ENCODE measurements at regions of chr2 and their contacts with region 1.

Region 1: GRCh38 chr2:109613922-109614714 is at the starts of genes SEPTIN10 and SOWAHC:
- DNase-seq: peak; percentile 96 to 98 (median 97)
- H3K4me3 ChIP-seq: peak within 1 kb of the TSS; percentile 85
- H3K27ac ChIP-seq: peak within 1 kb of the TSS; percentile 98 to 99
- H3K4me1 ChIP-seq: peaks cover 18% of the 10 kb centered on the region
- H3K27me3 ChIP-seq: no peaks in the 10 kb centered on the region
- CTCF ChIP-seq: no peak
- EP300 ChIP-seq: peak; percentile 88
- POLR2A ChIP-seq: peak; percentile 84
- total RNA-seq, gene SEPTIN10: 71.6 to 93.8 (median 78.0) TPM
- total RNA-seq, gene SOWAHC: 13.9 to 36.1 (median 17.0) TPM

Region 2: GRCh38 chr2:109558076-109558882 is 55.8 kb before region 1 on chr2:
- intact Hi-C with region 1: loop called in 1 of 4 experiments (anchors 2 kb)
- DNase-seq: no peak
- H3K4me3 ChIP-seq: no peak overlapping the region
- H3K27ac ChIP-seq: no peak overlapping the region
- H3K4me1 ChIP-seq: no peaks in the 10 kb centered on the region
- H3K27me3 ChIP-seq: no peaks in the 10 kb centered on the region
- CTCF ChIP-seq: no peak
- EP300 ChIP-seq: no peak
- POLR2A ChIP-seq: no peak

Region 3: GRCh38 chr2:109690822-109691547 is 76.9 kb after region 1 on chr2:
- intact Hi-C with region 1: loop called in 2 of 4 experiments (anchors 10 kb)
- DNase-seq: peak; percentile 54 to 67 (median 62)
- H3K4me3 ChIP-seq: no peak overlapping the region
- H3K27ac ChIP-seq: peak overlapping the region; percentile 7 to 86
- H3K4me1 ChIP-seq: peaks cover 33% of the 10 kb centered on the region
- H3K27me3 ChIP-seq: no peaks in the 10 kb centered on the region
- CTCF ChIP-seq: no peak
- EP300 ChIP-seq: no peak
- POLR2A ChIP-seq: no peak

Measured in ovary (tissue), 10 donors.